Activated CD4-positive, alpha-beta T cell treated with anti-CD3 and anti-CD28 coated beads for 36 hours (primary cell): ENCODE measurements at regions of chr7 and their contacts with region 1.

Region 1: DNA sequence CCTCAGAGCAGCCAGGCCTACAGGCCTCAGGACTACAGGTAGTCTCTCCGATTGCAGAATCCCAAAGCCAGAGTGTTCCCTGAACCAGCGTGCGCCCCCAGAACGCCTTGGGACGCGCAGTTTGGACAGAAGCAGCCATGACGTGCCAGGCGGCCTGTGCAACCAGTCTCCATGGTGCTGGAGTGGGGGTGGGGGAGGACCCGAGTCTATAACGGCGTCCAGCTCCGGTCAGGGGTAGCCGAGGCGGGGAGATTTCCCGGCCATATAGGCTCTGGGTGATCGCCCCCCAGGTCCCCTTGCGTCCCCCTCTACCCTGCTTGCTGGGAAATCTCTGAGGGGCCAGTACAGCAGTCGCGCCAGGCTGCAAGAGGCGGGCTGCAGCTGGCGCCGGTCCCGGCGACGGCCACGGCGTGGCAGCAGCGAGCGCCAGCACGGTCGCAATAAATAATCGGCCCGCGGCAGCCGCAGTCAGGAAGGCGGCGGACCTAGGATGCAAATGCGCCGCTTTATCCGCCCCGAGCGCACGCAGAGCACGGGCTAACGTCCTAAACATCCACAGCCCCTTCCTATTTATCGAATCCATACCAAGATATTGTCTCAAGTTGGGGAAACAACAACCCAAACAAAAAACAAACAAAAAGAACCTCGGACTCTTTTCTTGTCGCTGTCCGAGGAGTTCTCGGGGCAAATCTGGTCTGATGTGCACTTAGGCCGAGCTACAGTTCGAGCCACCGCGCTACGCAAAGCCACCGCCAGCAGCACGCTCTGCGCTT is 1.6 kb downstream of the HOXA3 start:
- DNase-seq: peak; percentile 82
- ATAC-seq: peak; percentile 83
- H3K4me3 Mint-ChIP-seq: peak overlapping the region; percentile 35
- H3K27ac Mint-ChIP-seq: no peak overlapping the region
- H3K4me1 Mint-ChIP-seq: peaks cover 36% of the 10 kb centered on the region
- H3K27me3 Mint-ChIP-seq: peaks cover 83% of the 10 kb centered on the region

Region 2: GRCh38 chr7:26978146-26978545 is 172.6 kb before region 1 on chr7:
- CTCF ChIA-PET with region 1: no interaction called
- POLR2A ChIA-PET with region 1: no interaction called
- intact Hi-C with region 1: no loop called
- DNase-seq: no peak
- ATAC-seq: no peak
- H3K4me3 Mint-ChIP-seq: no peak overlapping the region
- H3K27ac Mint-ChIP-seq: no peak overlapping the region
- H3K4me1 Mint-ChIP-seq: no peaks in the 10 kb centered on the region
- H3K27me3 Mint-ChIP-seq: peaks cover 8% of the 10 kb centered on the region

Region 3: GRCh38 chr7:27130540-27131389 is 20.0 kb before region 1 on chr7 and contains the start of gene HOXA4:
- CTCF ChIA-PET with region 1: interaction called, 3 read pairs
- POLR2A ChIA-PET with region 1: no interaction called
- intact Hi-C with region 1: loop called in 1 of 2 experiments (anchors 2 kb)
- DNase-seq: peak; percentile 83
- ATAC-seq: peak; percentile 87
- H3K4me3 Mint-ChIP-seq: peak within 1 kb of the TSS; percentile 56
- H3K27ac Mint-ChIP-seq: peak within 1 kb of the TSS; percentile 42
- H3K4me1 Mint-ChIP-seq: peaks cover 17% of the 10 kb centered on the region
- H3K27me3 Mint-ChIP-seq: peaks cover 38% of the 10 kb centered on the region
- total RNA-seq, gene HOXA4: 0.25 TPM in 1 of 2 experiments, not detected in the other

Region 4: DNA sequence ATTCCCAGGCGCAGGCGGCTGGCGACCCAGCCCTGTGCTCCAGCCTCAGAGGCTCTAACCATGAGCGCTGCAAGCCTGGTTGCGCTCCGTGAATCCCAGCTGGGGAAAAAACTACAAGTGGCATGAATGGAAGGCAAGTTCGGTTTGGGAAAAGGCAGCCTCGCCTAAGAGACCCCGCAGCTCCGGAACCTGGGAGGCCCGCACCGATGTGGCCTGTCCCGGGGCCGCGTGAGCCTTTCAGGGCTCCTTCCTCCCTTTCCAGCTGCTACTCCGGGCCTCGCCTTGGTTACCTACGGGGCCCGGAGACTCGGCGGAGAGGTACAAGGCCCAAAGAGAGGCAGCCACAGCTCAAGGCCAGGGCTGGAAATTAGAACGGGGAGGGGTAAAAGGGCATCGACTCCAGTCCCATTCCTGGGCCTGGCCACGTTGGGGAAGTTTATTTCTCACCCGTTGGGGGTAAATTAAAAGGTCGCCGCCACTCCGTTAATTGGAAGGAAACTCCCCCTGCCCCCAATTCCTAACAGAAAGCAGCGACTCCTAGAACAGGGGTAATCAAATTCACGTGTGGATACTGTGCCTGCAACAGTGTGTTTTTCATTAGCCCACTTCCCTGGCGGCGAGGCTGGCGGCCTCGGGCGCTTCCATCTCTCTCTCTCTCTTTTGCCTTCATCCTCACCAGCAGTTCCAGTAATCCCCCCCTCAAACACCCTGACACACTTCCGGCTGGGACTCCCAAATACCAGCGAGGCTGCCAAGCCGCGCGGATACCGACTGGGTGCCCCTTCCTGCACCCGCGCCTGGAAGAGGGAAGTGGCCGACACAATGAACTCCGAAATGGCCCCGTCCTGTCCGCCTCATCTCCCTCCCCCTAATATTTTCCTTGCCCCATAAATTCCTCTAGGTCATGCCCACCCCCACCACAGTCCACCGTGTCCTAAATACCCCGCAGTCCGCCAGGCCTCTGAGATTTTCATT is 16.1 kb after region 1 on chr7:
- CTCF ChIA-PET with region 1: interaction called, 16 read pairs
- POLR2A ChIA-PET with region 1: interaction called, 8 read pairs
- intact Hi-C with region 1: loop called in 1 of 2 experiments (anchors 2 kb)
- DNase-seq: peak; percentile 19
- ATAC-seq: no peak
- H3K4me3 Mint-ChIP-seq: no peak overlapping the region
- H3K27ac Mint-ChIP-seq: no peak overlapping the region
- H3K4me1 Mint-ChIP-seq: peaks cover 26% of the 10 kb centered on the region
- H3K27me3 Mint-ChIP-seq: peaks cover 78% of the 10 kb centered on the region